ENCODE measurements at regions of chr2 and their contacts with region 1.

Region 1: GRCh38 chr2:191245046-191245868 is at the start of gene MYO1B:
- DNase-seq: peak; percentile 74
- ATAC-seq: peak; percentile 81
- H3K4me3 ChIP-seq: peak within 1 kb of the TSS; percentile 97
- H3K27ac ChIP-seq: peak within 1 kb of the TSS; percentile 97
- H3K4me1 ChIP-seq: peaks cover 14% of the 10 kb centered on the region
- H3K27me3 ChIP-seq: no peaks in the 10 kb centered on the region
- CTCF ChIP-seq: peak; percentile 61
- POLR2A ChIP-seq: peak; percentile 78
- RAD21 ChIP-seq: peak; percentile 65
- total RNA-seq, gene MYO1B: 116 and 167 TPM in 2 replicates

Region 2: DNA sequence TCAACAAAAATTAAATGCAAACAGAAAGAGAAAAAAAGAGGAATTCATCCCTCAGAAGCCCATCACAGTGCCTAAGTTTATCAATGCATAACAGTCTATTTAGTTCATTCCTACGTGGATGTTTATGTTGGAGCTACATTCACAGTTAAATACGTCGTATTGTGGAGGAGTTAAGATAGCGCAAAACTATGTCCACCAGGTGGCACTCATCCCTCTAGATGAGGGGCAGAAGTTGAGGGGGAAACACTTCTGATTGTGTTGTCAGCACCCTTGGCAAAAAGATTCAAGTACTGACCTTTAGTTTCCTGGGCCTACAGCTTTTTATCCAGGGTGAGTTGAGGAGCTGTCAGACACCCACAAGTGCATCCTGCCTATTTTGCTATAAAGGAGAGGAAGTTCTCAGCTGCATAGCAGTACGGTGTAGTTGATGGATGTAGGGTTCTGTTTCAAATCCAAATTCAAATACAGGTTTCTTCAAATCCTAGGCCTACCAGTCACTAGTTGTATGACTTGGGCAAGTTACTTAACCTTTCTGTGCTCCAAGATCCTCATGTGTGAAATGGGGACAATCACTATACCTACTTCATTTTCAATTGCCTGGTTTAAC is 26.9 kb before region 1 on chr2:
- CTCF ChIA-PET with region 1: interaction called, 3 read pairs
- POLR2A ChIA-PET with region 1: no interaction called
- dilution Hi-C with region 1: no loop called
- in situ Hi-C with region 1: no loop called
- intact Hi-C with region 1: loop called (anchors 1 kb)
- DNase-seq: peak; percentile 92
- ATAC-seq: peak; percentile 86
- H3K4me3 ChIP-seq: no peak overlapping the region
- H3K27ac ChIP-seq: peak overlapping the region; percentile 59; the same call in 1 of the 2 replicates
- H3K4me1 ChIP-seq: peaks cover 8% of the 10 kb centered on the region; the same call in 1 of the 2 replicates
- H3K27me3 ChIP-seq: no peaks in the 10 kb centered on the region
- CTCF ChIP-seq: peak; percentile 82
- POLR2A ChIP-seq: no peak
- RAD21 ChIP-seq: peak; percentile 83

Region 3: GRCh38 chr2:191274413-191274815 is 29.2 kb after region 1 on chr2:
- CTCF ChIA-PET with region 1: no interaction called
- POLR2A ChIA-PET with region 1: no interaction called
- dilution Hi-C with region 1: no loop called
- in situ Hi-C with region 1: no loop called
- intact Hi-C with region 1: no loop called
- DNase-seq: no peak
- ATAC-seq: no peak
- H3K4me3 ChIP-seq: no peak overlapping the region
- H3K27ac ChIP-seq: no peak overlapping the region
- H3K4me1 ChIP-seq: peaks cover 7% of the 10 kb centered on the region
- H3K27me3 ChIP-seq: no peaks in the 10 kb centered on the region
- CTCF ChIP-seq: no peak
- POLR2A ChIP-seq: no peak
- RAD21 ChIP-seq: no peak

Region 4: GRCh38 chr2:191291471-191291870 is 46.2 kb after region 1 on chr2:
- CTCF ChIA-PET with region 1: interaction called, 3 read pairs
- POLR2A ChIA-PET with region 1: interaction called, 5 read pairs
- dilution Hi-C with region 1: no loop called
- in situ Hi-C with region 1: no loop called
- intact Hi-C with region 1: loop called (anchors 2 kb)
- DNase-seq: no peak
- ATAC-seq: peak; percentile 38
- H3K4me3 ChIP-seq: no peak overlapping the region
- H3K27ac ChIP-seq: peak overlapping the region; percentile 21; the same call in 1 of the 2 replicates
- H3K4me1 ChIP-seq: peaks cover 17% of the 10 kb centered on the region
- H3K27me3 ChIP-seq: no peaks in the 10 kb centered on the region
- CTCF ChIP-seq: no peak
- POLR2A ChIP-seq: no peak
- RAD21 ChIP-seq: no peak

Region 5: GRCh38 chr2:191318729-191319078 is 73.4 kb after region 1 on chr2:
- CTCF ChIA-PET with region 1: no interaction called
- POLR2A ChIA-PET with region 1: no interaction called
- dilution Hi-C with region 1: no loop called
- in situ Hi-C with region 1: no loop called
- intact Hi-C with region 1: no loop called
- DNase-seq: peak; percentile 85
- ATAC-seq: peak; percentile 93
- H3K4me3 ChIP-seq: no peak overlapping the region
- H3K27ac ChIP-seq: peak overlapping the region; percentile 57; the same call in 1 of the 2 replicates
- H3K4me1 ChIP-seq: peaks cover 23% of the 10 kb centered on the region
- H3K27me3 ChIP-seq: no peaks in the 10 kb centered on the region
- CTCF ChIP-seq: no peak
- POLR2A ChIP-seq: no peak
- RAD21 ChIP-seq: no peak

Region 6: DNA sequence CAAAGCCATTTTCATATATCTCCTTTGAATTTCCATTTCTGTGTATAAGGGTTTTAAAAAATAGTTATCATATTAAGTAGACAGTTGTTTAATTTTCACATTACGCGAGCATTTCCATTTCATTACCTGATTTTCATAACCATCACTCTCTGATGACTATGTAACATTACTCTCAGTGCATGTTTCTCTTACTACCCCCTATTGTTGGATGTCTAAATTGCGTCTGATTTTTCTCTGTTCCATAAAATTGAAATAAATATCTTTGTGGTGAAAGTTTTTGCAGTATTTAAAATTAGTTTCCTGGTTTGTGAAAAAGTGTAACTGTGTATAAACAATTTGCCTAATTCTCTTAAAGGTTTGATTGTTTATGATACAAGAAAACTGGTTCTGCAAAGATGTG is 123.8 kb after region 1 on chr2:
- CTCF ChIA-PET with region 1: no interaction called
- POLR2A ChIA-PET with region 1: no interaction called
- dilution Hi-C with region 1: no loop called
- in situ Hi-C with region 1: no loop called
- intact Hi-C with region 1: loop called (anchors 5 kb)
- DNase-seq: no peak
- ATAC-seq: no peak
- H3K4me3 ChIP-seq: no peak overlapping the region
- H3K27ac ChIP-seq: no peak overlapping the region
- H3K4me1 ChIP-seq: peaks cover 21% of the 10 kb centered on the region
- H3K27me3 ChIP-seq: no peaks in the 10 kb centered on the region
- CTCF ChIP-seq: peak; percentile 46
- POLR2A ChIP-seq: no peak
- RAD21 ChIP-seq: peak; percentile 39; the same call in 1 of the 2 replicates

Region 7: DNA sequence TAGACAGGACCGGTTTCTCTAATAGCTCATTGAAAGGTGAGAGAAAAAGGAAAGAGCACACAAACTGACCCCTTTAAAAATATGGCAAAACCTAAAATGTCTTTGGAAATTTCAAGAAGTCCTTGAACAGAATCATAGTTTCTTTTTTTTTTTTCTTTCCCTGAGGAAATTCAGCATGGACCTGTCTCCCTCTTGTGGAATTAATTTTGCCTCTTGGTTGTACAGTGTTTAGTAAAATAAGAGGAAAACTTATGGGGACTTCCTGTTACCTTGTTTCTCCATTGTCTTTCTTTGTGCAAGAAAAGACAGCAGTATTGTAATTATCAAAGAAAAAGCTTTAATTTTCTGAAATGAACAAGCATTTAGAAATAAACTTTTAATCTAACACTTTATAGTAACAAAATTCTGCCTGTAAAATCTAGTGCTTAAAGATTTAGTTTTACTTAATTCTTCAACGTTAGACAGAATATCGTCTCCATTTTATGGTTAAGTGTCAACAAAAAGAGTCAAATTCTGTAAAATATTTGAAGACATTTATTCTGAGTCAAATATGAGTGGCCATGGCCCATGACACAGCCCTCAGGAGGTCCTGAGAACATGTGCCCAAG is 256.4 kb after region 1 on chr2:
- CTCF ChIA-PET with region 1: interaction called, 4 read pairs
- POLR2A ChIA-PET with region 1: no interaction called
- dilution Hi-C with region 1: no loop called
- in situ Hi-C with region 1: no loop called
- intact Hi-C with region 1: loop called (anchors 1 kb)
- DNase-seq: peak; percentile 70
- ATAC-seq: peak; percentile 69
- H3K4me3 ChIP-seq: no peak overlapping the region
- H3K27ac ChIP-seq: no peak overlapping the region
- H3K4me1 ChIP-seq: peaks cover 4% of the 10 kb centered on the region; the same call in 1 of the 2 replicates
- H3K27me3 ChIP-seq: no peaks in the 10 kb centered on the region
- CTCF ChIP-seq: peak; percentile 90
- POLR2A ChIP-seq: no peak
- RAD21 ChIP-seq: peak; percentile 94

Region 8: GRCh38 chr2:192830821-192831220 is 1585.6 kb after region 1 on chr2:
- CTCF ChIA-PET with region 1: no interaction called
- POLR2A ChIA-PET with region 1: no interaction called
- dilution Hi-C with region 1: no loop called
- in situ Hi-C with region 1: no loop called
- intact Hi-C with region 1: no loop called
- DNase-seq: no peak
- ATAC-seq: no peak
- H3K4me3 ChIP-seq: no peak overlapping the region
- H3K27ac ChIP-seq: no peak overlapping the region
- H3K4me1 ChIP-seq: no peaks in the 10 kb centered on the region
- H3K27me3 ChIP-seq: no peaks in the 10 kb centered on the region
- CTCF ChIP-seq: no peak
- POLR2A ChIP-seq: no peak
- RAD21 ChIP-seq: no peak

Measured in IMR-90 (cell line).